Activated T-helper 1 cell treated with anti-CD3 and anti-CD28 coated beads, Interleukin-12 subunit alpha, Interleukin-12 subunit beta, Interleukin-2, Interleukin-4 antibody, amounts not matched to agents 30 ng/mL and 10 ng/mL and 1 ng/mL, durations not matched to agents 14 hours and 24 hours and 36 hours (primary cell): ENCODE measurements at regions of chr21 and their contacts with region 1.

Region 1: DNA sequence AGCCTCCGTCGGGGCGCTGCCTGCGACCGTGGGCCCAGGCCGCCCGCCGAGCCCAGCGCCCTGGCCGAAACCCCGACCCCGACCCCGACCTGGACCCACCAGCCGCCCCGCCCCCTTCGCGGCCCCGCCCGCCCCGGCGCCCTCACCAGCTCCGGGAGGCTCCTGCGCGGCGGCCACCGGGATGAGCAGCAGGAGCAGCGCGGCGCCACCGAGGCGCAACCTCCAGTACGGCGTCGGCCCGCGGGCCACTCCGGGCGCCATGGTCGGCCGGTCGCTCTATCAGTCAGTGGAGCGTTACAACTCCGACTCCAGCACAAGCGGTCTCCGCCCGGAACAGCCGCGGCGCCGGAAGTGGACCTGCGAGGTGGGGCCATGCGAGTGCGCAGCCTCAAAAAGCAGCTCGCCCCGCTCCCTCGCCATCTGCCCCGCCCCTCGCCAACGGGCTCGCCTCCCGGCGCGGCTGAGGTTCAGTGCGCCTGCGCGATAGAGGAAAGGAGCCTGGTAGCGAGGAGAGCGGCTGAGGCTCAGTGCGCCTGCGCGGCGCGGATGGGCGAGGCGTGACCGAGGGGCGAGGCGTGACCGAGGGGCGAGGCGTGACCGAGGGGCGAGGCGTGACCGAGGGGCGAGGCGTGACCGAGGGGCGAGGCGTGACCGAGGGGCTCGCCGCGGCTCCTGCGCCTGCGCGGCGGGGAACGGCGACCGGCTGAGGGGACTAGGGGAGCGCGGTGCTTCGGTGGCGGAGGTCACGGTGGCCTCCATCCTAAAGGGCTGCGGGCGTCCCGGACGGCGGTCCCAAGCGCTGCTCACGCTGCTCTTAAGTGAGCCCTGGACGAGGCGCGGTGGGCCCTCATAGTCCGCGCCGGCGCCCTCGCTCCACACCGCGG is at the start of gene PTTG1IP:
- DNase-seq: peak; percentile 100
- H3K4me3 Mint-ChIP-seq: peak within 1 kb of the TSS; percentile 93
- H3K27ac Mint-ChIP-seq: peak within 1 kb of the TSS; percentile 93
- H3K4me1 Mint-ChIP-seq: peaks cover 61% of the 10 kb centered on the region
- H3K27me3 Mint-ChIP-seq: no peaks in the 10 kb centered on the region
- total RNA-seq, gene PTTG1IP: 46.7 and 48.7 TPM in 2 replicates

Region 2: DNA sequence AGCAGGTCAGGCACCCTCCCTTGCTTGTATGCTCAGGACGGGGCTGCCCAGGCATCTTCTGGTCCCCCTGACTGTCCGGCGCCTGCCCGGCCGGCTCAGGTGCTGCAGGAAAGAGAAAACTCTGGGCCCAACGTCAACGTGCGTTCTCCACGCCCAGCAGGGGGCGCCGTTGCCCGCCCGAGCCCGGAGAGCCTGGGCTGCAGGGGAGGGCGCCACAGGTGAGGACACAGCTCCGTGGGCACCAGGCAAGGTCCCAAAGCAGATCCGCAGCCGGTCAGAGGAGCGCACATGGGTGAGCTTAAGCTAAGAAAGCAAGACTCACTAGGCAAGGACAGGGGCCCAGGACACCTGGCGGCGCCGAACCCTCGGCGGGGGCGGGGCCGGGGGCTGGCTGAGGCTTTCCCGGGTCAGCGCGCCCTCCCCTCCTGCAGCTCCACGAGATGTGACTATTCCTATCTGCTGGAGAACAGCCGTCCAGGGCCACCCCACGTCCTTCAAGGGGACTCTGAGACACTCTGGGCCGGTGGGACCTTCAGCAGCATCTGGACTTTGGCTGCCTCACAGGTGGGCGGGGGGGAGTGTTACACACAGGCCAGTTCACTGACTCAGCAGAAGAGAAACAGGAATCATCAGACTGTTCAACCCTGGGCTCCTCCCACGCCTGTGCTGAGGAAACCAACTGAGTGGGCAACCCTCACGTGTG is 362.9 kb before region 1 on chr21:
- intact Hi-C with region 1: loop called (anchors 2 kb)
- DNase-seq: peak; percentile 72
- H3K4me3 Mint-ChIP-seq: no peak overlapping the region
- H3K27ac Mint-ChIP-seq: no peak overlapping the region
- H3K4me1 Mint-ChIP-seq: no peaks in the 10 kb centered on the region
- H3K27me3 Mint-ChIP-seq: peaks cover 6% of the 10 kb centered on the region

Region 3: DNA sequence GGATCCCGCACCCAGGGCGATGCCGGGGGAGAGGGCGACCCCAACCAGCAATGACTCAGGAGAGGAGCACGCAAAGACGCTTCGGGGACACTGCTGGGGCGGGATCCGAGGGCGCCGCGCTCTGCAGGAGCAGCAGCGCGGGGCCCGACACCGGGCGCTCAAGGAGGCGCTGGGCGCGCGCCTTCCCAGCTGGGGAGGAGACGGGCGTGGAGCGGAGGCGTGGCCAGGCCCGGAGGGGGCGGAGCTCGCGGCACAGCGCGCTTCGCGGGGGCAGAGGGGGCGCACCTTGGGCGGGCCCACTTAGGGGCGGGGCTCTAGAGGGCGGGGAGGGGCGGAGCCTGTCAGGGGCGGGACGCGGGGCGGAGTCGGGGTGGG is 56.1 kb before region 1 on chr21:
- intact Hi-C with region 1: loop called (anchors 1 kb)
- DNase-seq: peak; percentile 92
- H3K4me3 Mint-ChIP-seq: peak overlapping the region; percentile 66
- H3K27ac Mint-ChIP-seq: no peak overlapping the region
- H3K4me1 Mint-ChIP-seq: peaks cover 11% of the 10 kb centered on the region
- H3K27me3 Mint-ChIP-seq: no peaks in the 10 kb centered on the region

Region 4: DNA sequence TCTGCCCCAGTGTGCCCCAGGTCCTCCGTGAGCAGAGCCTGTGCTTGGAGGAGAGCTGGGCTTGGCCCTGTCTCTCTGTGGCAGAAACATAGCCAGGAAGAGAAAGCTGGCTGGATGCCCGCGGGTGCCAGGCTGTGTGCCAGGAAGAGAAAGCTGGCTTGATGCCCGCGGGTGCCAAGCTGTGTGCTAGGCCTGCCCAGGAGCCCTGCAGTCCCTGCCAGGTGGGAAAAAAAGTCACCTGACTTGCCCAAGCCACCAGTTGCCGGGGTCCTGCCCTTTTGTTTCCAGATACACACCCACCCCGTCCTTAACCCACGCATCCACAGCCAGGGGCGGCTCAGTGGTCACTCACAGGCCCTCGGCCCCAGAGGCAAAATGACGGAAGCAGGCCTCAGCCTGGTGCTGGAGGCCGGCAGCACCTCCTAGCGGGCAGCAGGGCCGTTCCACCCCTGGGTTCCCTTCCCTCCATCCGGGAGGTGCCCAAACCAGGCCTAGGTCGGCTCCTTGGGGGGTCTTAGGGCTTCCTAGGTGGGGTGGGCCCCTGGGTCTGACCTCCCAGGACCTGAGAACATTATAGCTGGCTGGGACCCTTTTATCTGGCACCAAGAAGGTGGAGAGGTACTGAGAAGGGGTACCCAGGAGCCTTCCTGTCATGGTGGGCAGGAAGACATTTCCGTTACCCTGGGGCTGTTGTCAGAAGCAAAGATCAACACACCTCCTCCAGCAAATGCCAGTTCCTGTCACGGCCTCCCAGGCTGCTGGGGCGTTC is 38.0 kb after region 1 on chr21:
- intact Hi-C with region 1: loop called (anchors 1 kb)
- DNase-seq: peak; percentile 50
- H3K4me3 Mint-ChIP-seq: peak overlapping the region; percentile 78
- H3K27ac Mint-ChIP-seq: peak overlapping the region; percentile 90
- H3K4me1 Mint-ChIP-seq: peaks cover 63% of the 10 kb centered on the region
- H3K27me3 Mint-ChIP-seq: no peaks in the 10 kb centered on the region

Region 5: GRCh38 chr21:44927587-44928461 is 54.2 kb after region 1 on chr21:
- intact Hi-C with region 1: loop called (anchors 2 kb)
- DNase-seq: peak; percentile 68
- H3K4me3 Mint-ChIP-seq: peak overlapping the region; percentile 88
- H3K27ac Mint-ChIP-seq: peak overlapping the region; percentile 98
- H3K4me1 Mint-ChIP-seq: peaks cover 83% of the 10 kb centered on the region
- H3K27me3 Mint-ChIP-seq: no peaks in the 10 kb centered on the region

Region 6: GRCh38 chr21:45074048-45074817 is 200.6 kb after region 1 on chr21 and contains the start of gene ADARB1:
- intact Hi-C with region 1: loop called (anchors 2 kb)
- DNase-seq: peak; percentile 63
- H3K4me3 Mint-ChIP-seq: peak within 1 kb of the TSS; percentile 96
- H3K27ac Mint-ChIP-seq: peak within 1 kb of the TSS; percentile 98
- H3K4me1 Mint-ChIP-seq: peaks cover 42% of the 10 kb centered on the region
- H3K27me3 Mint-ChIP-seq: no peaks in the 10 kb centered on the region
- total RNA-seq, gene ADARB1: 24.8 and 25.9 TPM in 2 replicates